ENCODE measurements at regions of chr17 and their contacts with region 1.

Region 1: DNA sequence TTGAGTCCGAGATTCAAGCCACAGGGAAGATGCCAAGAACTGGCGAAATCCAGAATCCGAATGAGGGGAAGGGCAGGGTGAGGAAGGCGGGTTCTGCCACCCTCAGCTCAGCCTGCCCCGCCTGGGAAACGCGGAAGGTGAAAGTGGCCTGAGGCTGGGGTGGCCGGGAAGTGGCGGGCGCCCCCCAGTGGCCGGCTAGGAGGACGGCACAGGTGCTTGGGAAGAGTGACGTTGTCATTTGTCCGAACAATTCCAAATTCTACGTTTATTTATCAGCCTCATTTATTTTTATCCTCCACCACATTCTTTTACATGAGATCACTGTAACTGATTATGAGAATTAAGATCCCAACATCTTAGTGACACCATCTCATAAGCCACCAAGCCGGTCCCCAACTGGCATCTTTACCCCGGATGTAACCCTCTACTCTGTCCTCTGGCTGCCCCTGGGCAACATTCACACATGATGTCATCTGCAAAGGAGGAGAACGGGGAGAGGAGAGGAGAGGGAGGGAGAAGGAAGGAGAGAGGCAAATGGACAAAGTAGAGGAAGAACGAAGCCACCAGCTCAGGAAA is 21.3 kb downstream of the SRCIN1 start:
- DNase-seq: peak in 2 of 3 donors; percentile 50 to 60
- H3K4me3 ChIP-seq: no peak overlapping the region
- H3K27ac ChIP-seq: no peak overlapping the region
- H3K4me1 ChIP-seq: peaks cover 0 to 38% (median 27%) of the 10 kb centered on the region in 4 experiments
- H3K27me3 ChIP-seq: peaks cover 0 to 91% (median 35%) of the 10 kb centered on the region in 5 experiments

Region 2: GRCh38 chr17:38418693-38419507 is 165.5 kb before region 1 on chr17:
- CTCF ChIA-PET with region 1: no interaction called
- POLR2A ChIA-PET with region 1: no interaction called
- DNase-seq: peak in 2 of 3 donors; percentile 62 to 74
- H3K4me3 ChIP-seq: peak overlapping the region in 6 of 7 experiments; percentile 7 to 51 (median 42)
- H3K27ac ChIP-seq: no peak overlapping the region
- H3K4me1 ChIP-seq: peaks cover 0 to 31% (median 25%) of the 10 kb centered on the region in 4 experiments
- H3K27me3 ChIP-seq: peaks cover 3 to 50% (median 31%) of the 10 kb centered on the region in 5 experiments

Region 3: GRCh38 chr17:38598536-38598935 is 14.1 kb after region 1 on chr17:
- CTCF ChIA-PET with region 1: interaction called, 28 read pairs
- POLR2A ChIA-PET with region 1: interaction called, 4 read pairs
- DNase-seq: peak; percentile 65 to 82 (median 82)
- H3K4me3 ChIP-seq: no peak overlapping the region
- H3K27ac ChIP-seq: no peak overlapping the region
- H3K4me1 ChIP-seq: peaks cover 0 to 5% (median 2%) of the 10 kb centered on the region in 4 experiments
- H3K27me3 ChIP-seq: peaks cover 0 to 100% (median 60%) of the 10 kb centered on the region in 5 experiments

Region 4: GRCh38 chr17:38605888-38606645 is 21.6 kb after region 1 on chr17 and contains the start of gene SRCIN1:
- CTCF ChIA-PET with region 1: interaction called, 12 read pairs
- POLR2A ChIA-PET with region 1: interaction called, 3 read pairs
- DNase-seq: peak in 2 of 3 donors; percentile 40 to 43
- H3K4me3 ChIP-seq: peak within 1 kb of the TSS in 5 of 7 experiments; percentile 26 to 64 (median 33)
- H3K27ac ChIP-seq: no peak within 1 kb of the TSS
- H3K4me1 ChIP-seq: peaks cover 0 to 19% (median 14%) of the 10 kb centered on the region in 4 experiments
- H3K27me3 ChIP-seq: peaks cover 12 to 99% (median 54%) of the 10 kb centered on the region in 5 experiments

Region 5: GRCh38 chr17:38628441-38628840 is 44.0 kb after region 1 on chr17:
- CTCF ChIA-PET with region 1: no interaction called
- POLR2A ChIA-PET with region 1: no interaction called
- DNase-seq: peak in 2 of 3 donors; percentile 20 to 22
- H3K4me3 ChIP-seq: no peak overlapping the region
- H3K27ac ChIP-seq: no peak overlapping the region
- H3K4me1 ChIP-seq: no peaks in the 10 kb centered on the region
- H3K27me3 ChIP-seq: peaks cover 0 to 10% (median 2%) of the 10 kb centered on the region in 5 experiments

Measured in common myeloid progenitor, CD34-positive (primary cell).